KBM-7 (cell line): ENCODE measurements at regions of chr10 and their contacts with region 1.

Region 1: GRCh38 chr10:95246579-95247051 is 44.2 kb downstream of the PDLIM1 start:
- DNase-seq: peak; percentile 85

Region 2: GRCh38 chr10:94607111-94607510 is 639.5 kb before region 1 on chr10:
- in situ Hi-C with region 1: loop called (anchors 25 kb)
- DNase-seq: no peak

Region 3: DNA sequence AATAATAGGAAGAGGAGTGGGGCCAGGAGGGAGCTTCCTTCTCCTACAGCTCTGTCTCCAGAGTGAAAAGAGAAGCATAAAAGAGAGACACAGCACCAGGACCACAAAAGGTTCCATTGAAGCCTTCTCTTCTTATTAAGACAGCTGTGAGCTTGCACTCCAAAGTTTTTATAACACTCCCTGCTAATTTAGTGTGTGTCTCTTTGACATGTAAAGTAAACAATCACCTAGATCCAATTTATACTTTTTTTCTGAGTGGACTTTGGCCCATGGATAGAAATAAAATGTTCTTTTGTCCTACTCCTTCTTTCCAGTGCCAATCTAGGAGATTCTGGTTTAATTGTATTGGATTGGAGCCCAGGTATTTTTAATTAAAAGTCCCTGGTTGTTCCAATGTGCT is 177.3 kb before region 1 on chr10 and contains the start of gene CYP2C8:
- in situ Hi-C with region 1: no loop called
- DNase-seq: no peak

Region 4: DNA sequence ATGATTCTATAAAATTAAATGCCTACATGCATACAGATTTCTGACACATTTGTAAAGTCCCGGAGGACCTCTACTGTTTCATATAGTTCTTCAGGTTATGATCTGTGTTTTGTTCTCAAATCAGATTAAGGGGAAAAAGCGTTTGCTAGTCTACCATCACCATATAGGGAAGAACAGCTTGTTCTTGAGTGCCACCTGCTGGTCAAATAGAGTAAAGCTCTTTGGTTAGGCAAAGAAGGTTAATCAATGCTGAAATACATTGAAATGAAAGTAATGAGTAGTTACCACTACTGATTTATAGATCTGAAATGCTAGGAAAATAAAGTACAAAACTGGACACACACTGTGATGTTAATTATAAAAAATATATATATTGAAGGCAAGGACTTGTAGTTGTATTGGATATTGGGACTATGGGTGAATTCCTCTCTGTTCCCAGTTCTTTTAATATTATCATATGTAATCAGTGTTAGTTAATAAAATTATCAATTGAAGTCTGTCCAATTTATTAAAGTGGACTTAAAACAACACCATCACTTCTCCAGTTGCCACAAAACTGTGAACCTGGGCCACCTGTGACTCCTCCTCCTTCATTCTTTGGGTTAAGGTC is 116.8 kb after region 1 on chr10:
- in situ Hi-C with region 1: loop called (anchors 10 kb)
- DNase-seq: peak; percentile 77